Heart right ventricle (tissue), 16 donors: ENCODE measurements at regions of chr21 and their contacts with region 1.

Region 1: DNA sequence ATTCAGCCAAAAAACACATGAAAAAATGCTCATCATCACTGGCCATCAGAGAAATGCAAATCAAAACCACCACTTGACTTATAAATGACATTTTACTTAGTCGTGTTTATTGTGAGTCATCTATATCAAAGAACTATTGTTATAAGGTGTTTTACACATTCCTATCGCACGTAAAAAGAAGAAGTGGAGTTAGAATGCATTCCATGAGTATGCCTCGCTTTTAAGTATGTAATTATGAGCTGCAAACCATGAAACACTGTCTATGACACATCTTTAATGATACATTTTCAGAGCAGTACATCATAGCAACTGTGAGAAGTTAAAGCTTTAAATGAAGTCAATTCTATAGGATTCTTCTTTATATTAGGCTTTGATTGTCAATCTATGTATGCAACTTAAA is 614.3 kb upstream of the ADAMTS5 start:
- DNase-seq: no peak
- ATAC-seq: no peak
- H3K4me3 ChIP-seq: no peak overlapping the region
- H3K27ac ChIP-seq: no peak overlapping the region
- H3K4me1 ChIP-seq: no peaks in the 10 kb centered on the region
- H3K27me3 ChIP-seq: no peaks in the 10 kb centered on the region
- CTCF ChIP-seq: no peak

Region 2: DNA sequence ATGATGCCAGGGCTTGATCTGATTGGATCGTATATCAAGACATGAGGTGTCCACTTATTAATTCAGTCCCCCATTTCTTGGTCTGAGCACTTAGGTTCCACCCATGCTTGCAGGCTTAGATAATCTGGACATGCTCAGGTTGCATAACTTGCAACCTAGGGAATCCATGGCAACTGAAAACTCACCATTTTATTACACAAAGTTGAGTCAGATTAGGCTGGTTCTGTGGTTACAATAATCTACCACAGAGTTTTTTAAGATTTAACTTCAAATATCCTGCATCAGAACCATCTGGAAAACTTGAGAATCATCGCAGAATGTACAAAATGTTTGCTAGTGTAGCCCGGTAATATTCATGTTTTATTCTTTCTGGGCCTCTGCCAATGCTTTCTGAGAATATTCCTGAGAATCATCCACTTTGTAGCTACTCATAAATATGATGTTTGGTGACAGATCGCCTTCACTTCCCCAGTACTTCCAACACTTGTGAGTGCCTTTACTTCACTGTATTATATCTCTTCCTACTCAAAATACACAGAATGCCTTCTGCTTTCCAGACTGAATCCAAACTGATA is 93.0 kb after region 1 on chr21:
- intact Hi-C with region 1: loop called in 1 of 10 experiments (anchors 10 kb)
- DNase-seq: no peak
- ATAC-seq: peak in 1 of 8 donors; percentile 37
- H3K4me3 ChIP-seq: no peak overlapping the region
- H3K27ac ChIP-seq: no peak overlapping the region
- H3K4me1 ChIP-seq: no peaks in the 10 kb centered on the region
- H3K27me3 ChIP-seq: no peaks in the 10 kb centered on the region
- CTCF ChIP-seq: no peak